ENCODE measurements at regions of chr3 and their contacts with region 1.

Region 1: GRCh38 chr3:16247276-16248061 is 17.3 kb downstream of the DPH3 start:
- DNase-seq: peak; percentile 78
- CTCF ChIP-seq: peak; percentile 88

Region 2: GRCh38 chr3:16048435-16049318 is 198.8 kb before region 1 on chr3:
- in situ Hi-C with region 1: loop called (anchors 10 kb)
- DNase-seq: peak; percentile 82
- CTCF ChIP-seq: peak; percentile 57

Region 3: DNA sequence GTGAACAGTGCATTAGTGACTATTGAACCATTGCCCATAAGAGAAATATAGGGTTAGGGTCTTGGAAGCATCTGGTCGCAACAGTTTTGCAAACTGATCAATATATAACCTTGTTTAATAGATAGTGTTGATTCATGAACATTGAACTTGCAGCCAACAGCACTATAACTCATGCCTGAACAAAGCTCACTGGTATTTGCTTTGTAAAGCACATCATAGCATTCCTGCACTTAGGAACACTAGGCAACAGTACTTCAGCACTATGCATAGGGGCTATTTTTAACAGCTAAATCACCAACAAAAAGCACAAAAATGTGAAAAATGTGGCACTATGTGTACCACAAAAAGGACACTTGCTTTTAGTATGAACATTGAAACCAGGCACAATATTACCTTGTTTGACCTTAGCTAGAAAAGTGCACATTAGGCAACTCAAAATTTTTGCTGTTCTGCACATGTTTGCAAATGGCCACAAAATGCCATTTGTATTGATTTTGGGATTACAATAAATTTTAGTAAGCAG is 85.5 kb after region 1 on chr3:
- in situ Hi-C with region 1: no loop called
- DNase-seq: no peak
- CTCF ChIP-seq: no peak